ENCODE measurements at regions of chr17 and their contacts with region 1.

Region 1: DNA sequence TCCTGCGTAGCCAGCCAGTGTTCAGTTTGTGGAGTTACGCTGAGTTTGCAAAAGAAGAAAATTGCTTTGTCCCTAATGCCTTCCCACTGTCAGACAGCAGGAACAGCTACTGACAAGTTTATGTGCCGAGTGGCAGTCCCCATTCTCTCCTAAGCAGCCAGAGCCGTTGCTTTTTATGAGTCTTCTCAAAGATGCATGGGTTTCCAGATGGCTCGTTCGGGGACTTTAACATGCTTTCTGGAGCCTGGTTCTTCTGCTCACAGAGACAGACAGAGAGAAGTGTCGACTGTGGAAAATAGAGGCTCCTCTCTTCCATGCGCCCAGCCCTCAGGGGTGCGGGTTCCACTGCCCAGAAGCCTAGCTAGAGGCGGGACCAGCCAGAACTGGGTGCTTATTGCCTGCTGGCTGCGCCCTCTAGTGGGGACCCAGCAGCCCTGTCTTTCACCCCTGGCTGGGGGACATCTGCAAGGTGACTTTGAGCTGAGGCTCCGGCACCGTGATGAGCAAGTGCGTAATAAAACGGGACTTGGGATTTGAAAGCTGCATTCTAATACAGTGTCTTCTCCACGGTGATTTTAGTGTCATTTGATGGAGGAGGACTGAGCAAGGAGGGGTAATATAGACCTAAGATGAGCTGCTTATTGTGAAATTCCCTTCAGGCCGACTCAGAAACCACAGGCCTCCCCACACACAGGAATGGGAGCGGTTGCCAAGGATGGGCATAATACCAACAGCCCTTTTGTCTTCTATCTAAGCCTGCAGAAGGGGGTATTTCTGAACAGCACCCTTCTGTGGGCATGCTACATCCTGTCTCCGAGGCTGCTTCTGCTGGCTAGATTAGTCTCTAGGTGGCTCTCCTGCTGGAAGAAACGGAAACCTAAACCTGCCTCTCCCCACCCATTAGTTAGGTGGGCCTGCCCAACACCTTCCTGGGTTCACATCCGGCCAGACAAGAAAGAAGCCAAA is 73.1 kb downstream of the CCDC182 start:
- DNase-seq: peak; percentile 81
- ATAC-seq: peak; percentile 94

Region 2: DNA sequence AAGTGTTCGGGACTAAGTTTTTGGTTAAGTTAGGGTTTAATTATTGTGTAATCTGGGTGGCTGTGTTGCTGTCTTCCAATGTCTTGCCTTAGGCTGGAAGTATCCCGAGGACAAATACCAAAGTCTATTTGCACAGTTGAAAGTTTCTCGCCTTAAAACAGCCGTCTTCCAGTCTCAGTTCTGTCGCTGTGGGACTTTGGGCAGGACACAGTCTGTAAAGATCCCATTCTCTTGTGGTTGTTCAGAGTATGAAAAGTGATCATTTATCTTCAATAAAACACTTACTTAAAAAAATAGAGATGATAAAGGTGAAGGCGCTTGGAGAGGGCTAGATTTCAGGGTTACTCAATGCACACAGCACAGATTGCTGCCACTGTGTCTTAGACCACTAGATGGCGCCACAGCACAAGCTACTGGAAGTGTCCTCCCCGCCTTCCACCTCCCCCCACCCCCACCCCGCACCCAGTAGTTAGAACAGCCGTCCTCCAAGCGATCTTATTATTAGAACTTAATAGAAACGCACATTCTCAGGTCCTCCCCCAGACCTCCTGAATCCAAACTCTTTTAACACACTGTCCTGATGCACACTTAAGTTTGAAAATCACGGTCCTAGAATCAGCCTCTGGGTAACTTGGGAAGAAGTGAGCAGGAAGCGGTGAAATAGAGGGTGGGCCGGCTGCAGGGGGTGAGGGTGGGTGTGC is 541.0 kb before region 1 on chr17:
- intact Hi-C with region 1: loop called in 1 of 2 experiments (anchors 10 kb)
- DNase-seq: peak; percentile 86
- ATAC-seq: peak; percentile 94

Region 3: DNA sequence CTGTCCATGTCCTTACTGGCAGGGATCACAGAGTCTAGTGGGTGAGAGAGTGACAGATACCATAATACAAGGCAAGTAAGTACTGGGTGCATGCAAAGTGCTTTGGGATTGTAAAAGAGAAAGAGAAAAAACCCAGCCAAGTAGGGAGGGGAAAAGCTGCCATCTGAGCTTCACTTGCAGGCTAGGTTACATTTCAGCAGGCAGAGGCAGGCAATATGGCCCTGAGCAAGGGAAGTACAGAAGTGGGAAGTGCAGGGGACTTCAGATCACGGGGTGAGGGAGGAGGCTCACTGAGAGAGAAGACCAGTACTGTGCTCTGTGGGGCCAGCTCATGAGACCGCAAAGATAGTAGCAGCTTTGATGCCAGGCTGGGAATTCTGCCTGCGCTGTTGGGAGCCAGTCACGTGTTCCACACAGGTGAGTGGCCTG is 185.1 kb before region 1 on chr17:
- intact Hi-C with region 1: no loop called
- DNase-seq: no peak
- ATAC-seq: peak; percentile 6 to 16

Region 4: GRCh38 chr17:57597531-57598453 is 74.2 kb before region 1 on chr17:
- intact Hi-C with region 1: loop called (anchors 2 to 5 kb)
- DNase-seq: peak; percentile 79
- ATAC-seq: peak; percentile 66 to 69